ENCODE measurements at regions of chr5 and their contacts with region 1.

Region 1: GRCh38 chr5:39691993-39692392 is 267.2 kb upstream of the DAB2 start:
- DNase-seq: peak; percentile 35
- H3K4me3 ChIP-seq: no peak overlapping the region
- H3K27ac ChIP-seq: no peak overlapping the region
- H3K4me1 ChIP-seq: no peaks in the 10 kb centered on the region
- H3K27me3 ChIP-seq: no peaks in the 10 kb centered on the region
- CTCF ChIP-seq: peak; percentile 51 to 59

Region 2: GRCh38 chr5:39599721-39600431 is 92.1 kb before region 1 on chr5:
- CTCF ChIA-PET with region 1: no interaction called
- dilution Hi-C with region 1: no loop called
- in situ Hi-C with region 1: no loop called
- intact Hi-C with region 1: loop called (anchors 1 kb)
- DNase-seq: peak; percentile 42
- H3K4me3 ChIP-seq: no peak overlapping the region
- H3K27ac ChIP-seq: no peak overlapping the region
- H3K4me1 ChIP-seq: no peaks in the 10 kb centered on the region
- H3K27me3 ChIP-seq: no peaks in the 10 kb centered on the region
- CTCF ChIP-seq: peak; percentile 67 to 72

Region 3: GRCh38 chr5:39648532-39649213 is 43.3 kb before region 1 on chr5:
- CTCF ChIA-PET with region 1: no interaction called
- dilution Hi-C with region 1: no loop called
- in situ Hi-C with region 1: no loop called
- intact Hi-C with region 1: loop called (anchors 2 kb)
- DNase-seq: peak; percentile 73
- H3K4me3 ChIP-seq: no peak overlapping the region
- H3K27ac ChIP-seq: no peak overlapping the region
- H3K4me1 ChIP-seq: peaks cover 11% of the 10 kb centered on the region
- H3K27me3 ChIP-seq: no peaks in the 10 kb centered on the region
- CTCF ChIP-seq: peak in 1 of 2 donors; percentile 18

Region 4: GRCh38 chr5:40106847-40107246 is 414.9 kb after region 1 on chr5:
- CTCF ChIA-PET with region 1: no interaction called
- dilution Hi-C with region 1: no loop called
- in situ Hi-C with region 1: no loop called
- intact Hi-C with region 1: no loop called
- DNase-seq: no peak
- H3K4me3 ChIP-seq: no peak overlapping the region
- H3K27ac ChIP-seq: no peak overlapping the region
- H3K4me1 ChIP-seq: peaks cover 8% of the 10 kb centered on the region
- H3K27me3 ChIP-seq: no peaks in the 10 kb centered on the region
- CTCF ChIP-seq: no peak